Dorsolateral prefrontal cortex (tissue), 120 donors: ENCODE measurements at regions of chr12 and their contacts with region 1.

Region 1: GRCh38 chr12:49358483-49359141 is 8.7 kb upstream of the SPATS2 start:
- DNase-seq: peak in 2 of 10 donors; percentile 56 to 61
- H3K4me3 ChIP-seq: peak overlapping the region in 1 of 59 donors; percentile 3
- H3K27ac ChIP-seq: no peak overlapping the region
- H3K27me3 ChIP-seq: no peaks in the 10 kb centered on the region
- CTCF ChIP-seq: peak in 55 of 56 donors; percentile 69 to 93 (median 81)

Region 2: GRCh38 chr12:49279706-49280159 is 78.9 kb before region 1 on chr12:
- intact Hi-C with region 1: loop called in 1 of 2 experiments (anchors 5 kb)
- DNase-seq: peak in 1 of 10 donors; percentile 17
- H3K4me3 ChIP-seq: no peak overlapping the region
- H3K27ac ChIP-seq: peak overlapping the region in 14 of 59 donors; percentile 13 to 64 (median 36)
- H3K27me3 ChIP-seq: peaks cover 0 to 6% (median 0%) of the 10 kb centered on the region in 45 donors
- CTCF ChIP-seq: no peak

Region 3: GRCh38 chr12:49515266-49515665 is 156.7 kb after region 1 on chr12:
- intact Hi-C with region 1: loop called (anchors 2 kb)
- DNase-seq: no peak
- H3K4me3 ChIP-seq: no peak overlapping the region
- H3K27ac ChIP-seq: no peak overlapping the region
- H3K27me3 ChIP-seq: no peaks in the 10 kb centered on the region
- CTCF ChIP-seq: no peak

Region 4: GRCh38 chr12:49580572-49581535 is 222.2 kb after region 1 on chr12:
- intact Hi-C with region 1: loop called in 1 of 2 experiments (anchors 5 kb)
- DNase-seq: peak; percentile 44 to 90 (median 78)
- H3K4me3 ChIP-seq: no peak overlapping the region
- H3K27ac ChIP-seq: peak overlapping the region in 12 of 59 donors; percentile 6 to 61 (median 34)
- H3K27me3 ChIP-seq: no peaks in the 10 kb centered on the region
- CTCF ChIP-seq: peak; percentile 43 to 94 (median 80)

Region 5: GRCh38 chr12:49903695-49904423 is 545.2 kb after region 1 on chr12 and contains the start of gene FAIM2:
- intact Hi-C with region 1: no loop called
- DNase-seq: peak; percentile 84 to 95 (median 92)
- H3K4me3 ChIP-seq: peak within 1 kb of the TSS; percentile 56 to 89 (median 76)
- H3K27ac ChIP-seq: peak within 1 kb of the TSS; percentile 87 to 100 (median 98)
- H3K27me3 ChIP-seq: no peaks in the 10 kb centered on the region
- CTCF ChIP-seq: peak in 29 of 56 donors; percentile 3 to 58 (median 27)
- total RNA-seq, gene FAIM2: 390 to 1,056 (median 722) TPM